GM12878 (cell line): ENCODE measurements at regions of chr20 and their contacts with region 1.

Region 1: GRCh38 chr20:1776681-1777475 is 118.3 kb upstream of the SIRPA start:
- DNase-seq: peak; percentile 13
- ATAC-seq: peak; percentile 97
- H3K4me3 ChIP-seq: peak overlapping the region; percentile 69; the same call in 1 of the 2 replicates
- H3K27ac ChIP-seq: no peak overlapping the region
- H3K4me1 ChIP-seq: no peaks in the 10 kb centered on the region
- H3K27me3 ChIP-seq: peaks cover 0 to 2% of the 10 kb centered on the region in 2 experiments; a peak in 1 of 4 replicates
- CTCF ChIP-seq: peak; percentile 71 to 80 (median 74)
- EP300 ChIP-seq: no peak
- POLR2A ChIP-seq: no peak
- RAD21 ChIP-seq: peak; percentile 87

Region 2: GRCh38 chr20:1144401-1145172 is 632.3 kb before region 1 on chr20:
- CTCF ChIA-PET with region 1: no interaction called
- POLR2A ChIA-PET with region 1: no interaction called
- RAD21 ChIA-PET with region 1: no interaction called
- SMC1A ChIA-PET with region 1: no interaction called
- in situ Hi-C with region 1: no loop called
- intact Hi-C with region 1: no loop called
- DNase-seq: no peak
- ATAC-seq: no peak
- H3K4me3 ChIP-seq: no peak overlapping the region
- H3K27ac ChIP-seq: no peak overlapping the region
- H3K4me1 ChIP-seq: no peaks in the 10 kb centered on the region; the same call in 1 of the 2 replicates
- H3K27me3 ChIP-seq: no peaks in the 10 kb centered on the region
- CTCF ChIP-seq: no peak
- EP300 ChIP-seq: no peak
- POLR2A ChIP-seq: no peak
- RAD21 ChIP-seq: no peak

Region 3: DNA sequence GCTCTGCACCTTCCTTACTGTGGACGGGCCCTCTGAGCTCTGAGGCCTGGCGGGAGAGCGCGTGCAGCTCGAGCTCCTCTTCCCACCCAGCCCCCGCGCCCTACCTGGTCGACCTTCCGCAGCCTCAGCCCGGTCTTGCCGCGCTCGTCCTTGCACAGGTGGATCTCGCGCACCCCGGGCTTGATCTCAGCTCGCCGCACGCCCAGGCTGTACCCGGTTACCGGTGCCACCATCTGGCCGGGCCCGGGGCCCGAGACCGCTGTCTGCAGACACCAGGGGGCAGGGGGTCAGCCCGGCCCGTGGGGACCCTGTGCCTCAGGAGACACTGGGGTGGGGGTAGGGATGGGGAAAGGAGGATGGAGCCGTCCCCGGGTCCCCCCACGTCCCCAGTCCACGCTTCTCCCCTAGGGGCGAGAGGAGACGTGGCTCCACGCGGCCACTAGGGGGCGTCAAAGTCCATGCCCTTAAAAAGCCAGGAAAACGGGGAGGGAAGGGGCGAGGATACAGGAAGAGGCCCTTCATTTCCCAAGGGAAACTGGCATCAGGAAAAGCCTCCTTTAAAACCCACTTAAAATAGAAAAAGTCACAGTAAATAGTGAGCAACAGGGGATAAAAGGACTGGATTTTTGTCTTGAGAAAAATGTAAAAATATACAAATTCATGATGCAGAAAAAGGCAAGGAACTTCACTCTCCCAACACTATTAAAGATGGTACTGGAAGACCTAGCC is 463.5 kb before region 1 on chr20:
- CTCF ChIA-PET with region 1: interaction called, 8 read pairs
- POLR2A ChIA-PET with region 1: no interaction called
- RAD21 ChIA-PET with region 1: interaction called, 3 read pairs
- SMC1A ChIA-PET with region 1: no interaction called
- in situ Hi-C with region 1: no loop called
- intact Hi-C with region 1: loop called (anchors 10 kb)
- DNase-seq: no peak
- ATAC-seq: peak; percentile 90
- H3K4me3 ChIP-seq: no peak overlapping the region
- H3K27ac ChIP-seq: no peak overlapping the region
- H3K4me1 ChIP-seq: peaks cover 6% of the 10 kb centered on the region; the same call in 1 of the 2 replicates
- H3K27me3 ChIP-seq: no peaks in the 10 kb centered on the region
- CTCF ChIP-seq: peak; percentile 87 to 92 (median 89)
- EP300 ChIP-seq: no peak
- POLR2A ChIP-seq: no peak
- RAD21 ChIP-seq: peak; percentile 95

Region 4: GRCh38 chr20:1509237-1509636 is 267.6 kb before region 1 on chr20:
- CTCF ChIA-PET with region 1: interaction called, 66 read pairs
- POLR2A ChIA-PET with region 1: interaction called, 3 read pairs
- RAD21 ChIA-PET with region 1: interaction called, 38 read pairs
- SMC1A ChIA-PET with region 1: interaction called, 22 read pairs
- in situ Hi-C with region 1: no loop called
- intact Hi-C with region 1: loop called (anchors 1 kb)
- DNase-seq: no peak
- ATAC-seq: peak; percentile 98
- H3K4me3 ChIP-seq: no peak overlapping the region
- H3K27ac ChIP-seq: no peak overlapping the region
- H3K4me1 ChIP-seq: 0 out of 2 replicates have a peak, but pooled peaks cover 3% of the 10 kb centered on the region
- H3K27me3 ChIP-seq: peaks cover 0 to 8% of the 10 kb centered on the region in 2 experiments; a peak in 1 of 4 replicates
- CTCF ChIP-seq: peak; percentile 59 to 68 (median 60)
- EP300 ChIP-seq: no peak
- POLR2A ChIP-seq: no peak
- RAD21 ChIP-seq: peak; percentile 87

Region 5: DNA sequence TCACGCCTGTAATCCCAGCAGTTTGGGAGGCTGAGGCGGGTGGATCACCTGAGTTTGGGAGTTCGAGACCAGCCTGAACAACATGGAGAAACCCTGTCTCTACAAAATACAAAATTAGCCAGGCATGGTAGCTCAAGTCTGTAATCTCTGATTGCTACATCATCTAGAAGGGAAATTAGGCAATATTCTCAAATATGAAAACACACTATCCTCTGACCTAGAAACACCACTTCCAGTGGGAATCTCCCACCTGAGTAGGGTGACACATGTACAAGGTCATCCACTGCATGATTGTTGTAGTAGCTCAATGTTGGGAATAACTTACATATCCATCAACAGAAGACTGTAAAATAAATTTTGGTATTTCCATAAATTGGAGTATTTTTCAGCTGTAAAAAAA is 200.2 kb before region 1 on chr20:
- CTCF ChIA-PET with region 1: no interaction called
- POLR2A ChIA-PET with region 1: no interaction called
- RAD21 ChIA-PET with region 1: no interaction called
- SMC1A ChIA-PET with region 1: no interaction called
- in situ Hi-C with region 1: no loop called
- intact Hi-C with region 1: loop called (anchors 1 kb)
- DNase-seq: no peak
- ATAC-seq: no peak
- H3K4me3 ChIP-seq: no peak overlapping the region
- H3K27ac ChIP-seq: no peak overlapping the region
- H3K4me1 ChIP-seq: no peaks in the 10 kb centered on the region
- H3K27me3 ChIP-seq: no peaks in the 10 kb centered on the region
- CTCF ChIP-seq: no peak
- EP300 ChIP-seq: no peak
- POLR2A ChIP-seq: no peak
- RAD21 ChIP-seq: no peak

Region 6: DNA sequence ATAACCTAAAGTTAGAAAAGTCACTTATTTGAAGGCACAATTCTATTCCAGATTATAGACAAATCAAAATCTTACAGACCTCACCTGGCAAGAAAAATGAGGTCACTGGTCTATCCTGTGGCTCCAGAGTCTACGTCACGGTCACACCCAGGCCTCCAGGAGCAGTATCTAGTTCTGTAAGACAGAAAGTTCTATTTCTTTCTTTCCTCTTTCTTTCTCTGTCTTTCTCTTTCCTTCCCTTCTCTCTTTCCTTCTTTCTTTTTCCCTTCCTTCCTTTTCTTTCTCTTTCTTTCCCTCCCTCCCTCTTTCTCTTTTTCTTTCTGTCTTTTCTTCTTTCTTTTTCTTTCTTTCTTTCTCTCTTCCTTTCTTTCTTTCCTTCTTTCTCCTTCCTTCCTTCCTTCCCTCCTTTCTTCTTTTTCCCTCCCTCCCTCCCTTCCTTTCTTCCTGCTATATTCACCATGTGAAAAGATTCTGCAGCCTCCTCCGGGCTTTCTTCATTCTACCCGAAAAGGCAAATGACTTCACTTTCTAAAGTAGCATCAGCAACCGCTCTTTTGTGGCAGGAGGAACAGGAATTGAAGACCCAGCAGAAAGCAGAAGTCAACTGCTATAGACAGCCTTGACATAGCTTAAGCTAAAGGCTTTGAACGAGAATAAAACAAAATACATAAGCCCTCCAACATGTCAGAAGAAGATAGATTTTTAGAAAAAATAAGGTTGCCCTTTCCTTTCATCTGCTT is 35.4 kb before region 1 on chr20:
- CTCF ChIA-PET with region 1: interaction called, 18 read pairs
- POLR2A ChIA-PET with region 1: no interaction called
- RAD21 ChIA-PET with region 1: interaction called, 12 read pairs
- SMC1A ChIA-PET with region 1: interaction called, 8 read pairs
- in situ Hi-C with region 1: no loop called
- intact Hi-C with region 1: no loop called
- DNase-seq: no peak
- ATAC-seq: peak; percentile 93
- H3K4me3 ChIP-seq: no peak overlapping the region
- H3K27ac ChIP-seq: no peak overlapping the region
- H3K4me1 ChIP-seq: no peaks in the 10 kb centered on the region
- H3K27me3 ChIP-seq: no peaks in the 10 kb centered on the region; a peak in 1 of 4 replicates
- CTCF ChIP-seq: no peak
- EP300 ChIP-seq: no peak
- POLR2A ChIP-seq: no peak
- RAD21 ChIP-seq: no peak

Region 7: GRCh38 chr20:1764136-1765033 is 12.5 kb before region 1 on chr20:
- CTCF ChIA-PET with region 1: interaction called, 98 read pairs
- POLR2A ChIA-PET with region 1: interaction called, 8 read pairs
- RAD21 ChIA-PET with region 1: interaction called, 51 read pairs
- SMC1A ChIA-PET with region 1: interaction called, 51 read pairs
- in situ Hi-C with region 1: no loop called
- intact Hi-C with region 1: loop called (anchors 1 kb)
- DNase-seq: peak; percentile 57
- ATAC-seq: peak; percentile 100
- H3K4me3 ChIP-seq: no peak overlapping the region
- H3K27ac ChIP-seq: no peak overlapping the region
- H3K4me1 ChIP-seq: peaks cover 4% of the 10 kb centered on the region
- H3K27me3 ChIP-seq: peaks cover 0 to 2% of the 10 kb centered on the region in 2 experiments; a peak in 2 of 4 replicates
- CTCF ChIP-seq: peak; percentile 80 to 89 (median 81)
- EP300 ChIP-seq: no peak
- POLR2A ChIP-seq: no peak
- RAD21 ChIP-seq: peak; percentile 79

Region 8: GRCh38 chr20:1802385-1803060 is 25.6 kb after region 1 on chr20:
- CTCF ChIA-PET with region 1: interaction called, 20 read pairs
- POLR2A ChIA-PET with region 1: no interaction called
- RAD21 ChIA-PET with region 1: interaction called, 7 read pairs
- SMC1A ChIA-PET with region 1: interaction called, 16 read pairs
- in situ Hi-C with region 1: no loop called
- intact Hi-C with region 1: loop called (anchors 2 kb)
- DNase-seq: no peak
- ATAC-seq: peak; percentile 88
- H3K4me3 ChIP-seq: peak overlapping the region; percentile 62
- H3K27ac ChIP-seq: no peak overlapping the region
- H3K4me1 ChIP-seq: peaks cover 13% of the 10 kb centered on the region
- H3K27me3 ChIP-seq: peaks cover 2% of the 10 kb centered on the region in 2 experiments; a peak in 1 of 4 replicates
- CTCF ChIP-seq: peak; percentile 75 to 78 (median 77)
- EP300 ChIP-seq: no peak
- POLR2A ChIP-seq: no peak
- RAD21 ChIP-seq: peak; percentile 83